Sigmoid colon (tissue), 7 donors: ENCODE measurements at regions of chr2 and their contacts with region 1.

Region 1: GRCh38 chr2:214809751-214810564 is 475 bp upstream of the BARD1 start:
- DNase-seq: peak; percentile 99
- H3K4me3 ChIP-seq: peak overlapping the region; percentile 57 to 84 (median 74)
- H3K27ac ChIP-seq: peak overlapping the region; percentile 87 to 97 (median 95)
- H3K4me1 ChIP-seq: peaks cover 0 to 20% (median 12%) of the 10 kb centered on the region in 4 donors
- H3K27me3 ChIP-seq: no peaks in the 10 kb centered on the region
- CTCF ChIP-seq: no peak
- EP300 ChIP-seq: no peak
- POLR2A ChIP-seq: peak in 1 of 2 donors; percentile 23

Region 2: DNA sequence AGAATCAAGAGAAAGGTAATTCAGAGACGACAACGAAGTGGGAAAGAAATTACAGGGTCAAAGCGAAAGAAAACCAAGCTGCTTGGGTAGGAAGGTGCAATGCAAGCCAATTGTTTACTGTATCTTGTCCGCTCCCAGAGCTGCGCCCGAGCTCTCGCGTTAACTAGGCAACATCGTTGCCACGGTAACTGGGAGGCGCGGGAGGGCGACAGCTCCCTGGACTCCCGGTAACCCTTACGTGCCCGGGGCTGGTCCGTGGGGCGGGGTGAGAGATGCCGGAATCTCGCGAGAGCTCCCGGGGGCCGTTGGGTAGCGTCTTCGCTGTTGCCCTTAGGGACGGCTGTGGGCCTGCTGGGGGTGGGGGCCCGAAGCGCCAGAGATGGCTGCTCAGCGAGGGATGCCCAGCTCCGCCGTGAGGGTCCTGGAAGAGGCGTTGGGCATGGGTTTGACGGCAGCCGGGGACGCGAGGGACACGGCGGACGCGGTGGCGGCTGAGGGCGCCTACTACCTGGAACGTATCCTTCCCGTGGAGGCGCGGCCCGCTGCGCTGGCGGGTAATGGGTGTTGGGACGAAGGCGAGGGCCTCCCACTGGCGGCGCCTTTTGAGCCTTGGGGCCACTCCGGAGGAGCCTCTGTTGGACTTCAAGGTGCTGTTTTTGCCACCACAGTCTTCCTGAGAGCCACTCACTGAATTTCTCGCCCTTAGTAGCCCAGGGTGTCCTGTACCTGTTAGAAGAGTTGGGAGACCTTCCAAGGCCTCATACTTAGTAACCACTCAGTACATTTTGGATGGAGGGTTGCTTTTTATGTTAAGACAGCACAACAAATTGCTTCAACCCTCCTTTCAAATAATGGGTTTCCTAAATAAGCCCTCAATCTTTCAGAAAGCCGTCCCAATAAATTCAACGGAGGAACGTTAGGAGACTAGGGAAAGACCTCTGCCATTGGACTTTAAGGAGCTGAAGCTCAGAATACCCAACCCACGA is 1525.6 kb before region 1 on chr2 and contains the start of gene SPAG16:
- intact Hi-C with region 1: loop called (anchors 5 kb)
- DNase-seq: peak; percentile 98
- H3K4me3 ChIP-seq: peak within 1 kb of the TSS; percentile 77 to 87 (median 80)
- H3K27ac ChIP-seq: peak within 1 kb of the TSS; percentile 76 to 83 (median 78)
- H3K4me1 ChIP-seq: peaks cover 0 to 21% (median 12%) of the 10 kb centered on the region in 4 donors
- H3K27me3 ChIP-seq: no peaks in the 10 kb centered on the region
- CTCF ChIP-seq: no peak
- EP300 ChIP-seq: no peak
- POLR2A ChIP-seq: no peak
- total RNA-seq, gene SPAG16: 27.1 to 70.3 (median 49.0) TPM